CD4-positive, alpha-beta T cell (primary cell): ENCODE measurements at regions of chr4 and their contacts with region 1.

Region 1: DNA sequence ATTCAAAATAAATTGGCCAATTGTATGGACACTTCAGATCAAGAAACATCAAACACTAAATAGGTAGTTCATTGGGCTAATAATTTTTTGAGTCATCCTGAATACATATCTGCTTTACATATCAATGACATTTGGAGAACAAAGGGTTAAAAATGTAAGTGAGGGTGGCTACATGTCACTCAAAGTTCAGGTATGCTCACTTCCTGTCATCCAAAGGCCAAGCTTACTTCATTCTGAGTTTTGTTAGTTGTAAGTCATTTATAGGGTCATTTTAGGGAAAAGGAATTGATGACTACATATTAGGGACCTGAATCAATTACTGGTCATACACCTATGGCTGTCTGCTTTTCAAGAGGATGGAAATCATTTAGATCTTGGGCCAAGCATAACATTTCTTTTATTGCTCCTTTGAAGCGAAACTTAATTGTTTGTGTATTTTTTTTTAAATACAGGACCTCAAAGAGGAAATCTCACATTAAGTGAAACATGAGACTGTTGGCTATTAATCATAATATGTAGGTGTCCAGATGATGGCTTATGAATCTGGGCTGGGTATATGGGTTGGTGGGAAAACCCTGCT is 119.2 kb upstream of the LEF1 start:
- DNase-seq: no peak
- ATAC-seq: no peak
- H3K4me3 ChIP-seq: no peak overlapping the region
- H3K4me3 Mint-ChIP-seq: no peak overlapping the region
- H3K27ac ChIP-seq: no peak overlapping the region
- H3K27ac Mint-ChIP-seq: no peak overlapping the region
- H3K4me1 ChIP-seq: no peaks in the 10 kb centered on the region
- H3K4me1 Mint-ChIP-seq: peaks cover 20% of the 10 kb centered on the region
- H3K27me3 ChIP-seq: no peaks in the 10 kb centered on the region
- H3K27me3 Mint-ChIP-seq: no peaks in the 10 kb centered on the region
- CTCF ChIP-seq: no peak

Region 2: GRCh38 chr4:108166441-108167315 is 121.2 kb before region 1 on chr4:
- CTCF ChIA-PET with region 1: no interaction called
- POLR2A ChIA-PET with region 1: no interaction called
- intact Hi-C with region 1: no loop called
- DNase-seq: peak; percentile 34 to 83 (median 60)
- ATAC-seq: peak; percentile 18
- H3K4me3 ChIP-seq: peak overlapping the region; percentile 76
- H3K4me3 Mint-ChIP-seq: peak overlapping the region; percentile 99
- H3K27ac ChIP-seq: peak overlapping the region; percentile 53 to 80
- H3K27ac Mint-ChIP-seq: peak overlapping the region; percentile 88
- H3K4me1 ChIP-seq: peaks cover 45% of the 10 kb centered on the region
- H3K4me1 Mint-ChIP-seq: peaks cover 45% of the 10 kb centered on the region
- H3K27me3 ChIP-seq: peaks cover 7 to 11% of the 10 kb centered on the region in 2 experiments
- H3K27me3 Mint-ChIP-seq: peaks cover 9% of the 10 kb centered on the region
- CTCF ChIP-seq: no peak

Region 3: GRCh38 chr4:108247387-108248049 is 40.4 kb before region 1 on chr4:
- CTCF ChIA-PET with region 1: no interaction called
- POLR2A ChIA-PET with region 1: no interaction called
- intact Hi-C with region 1: loop called in 1 of 2 experiments (anchors 5 kb)
- DNase-seq: no peak
- ATAC-seq: no peak
- H3K4me3 ChIP-seq: no peak overlapping the region
- H3K4me3 Mint-ChIP-seq: no peak overlapping the region
- H3K27ac ChIP-seq: no peak overlapping the region
- H3K27ac Mint-ChIP-seq: no peak overlapping the region
- H3K4me1 ChIP-seq: peaks cover 5% of the 10 kb centered on the region
- H3K4me1 Mint-ChIP-seq: peaks cover 20% of the 10 kb centered on the region
- H3K27me3 ChIP-seq: no peaks in the 10 kb centered on the region
- H3K27me3 Mint-ChIP-seq: no peaks in the 10 kb centered on the region
- CTCF ChIP-seq: no peak